Naive thymus-derived CD4-positive, alpha-beta T cell (primary cell): ENCODE measurements at regions of chr11 and their contacts with region 1.

Region 1: GRCh38 chr11:65615229-65615941 is at the start of gene PCNX3:
- DNase-seq: peak; percentile 95 to 100 (median 100)
- ATAC-seq: peak; percentile 92
- H3K4me3 ChIP-seq: peak within 1 kb of the TSS; percentile 89
- H3K4me3 Mint-ChIP-seq: peak within 1 kb of the TSS; percentile 94 to 99 (median 97)
- H3K27ac ChIP-seq: peak within 1 kb of the TSS; percentile 98
- H3K27ac Mint-ChIP-seq: peak within 1 kb of the TSS; percentile 90 to 99 (median 97)
- H3K4me1 ChIP-seq: peaks cover 42 to 45% of the 10 kb centered on the region in 2 donors
- H3K4me1 Mint-ChIP-seq: peaks cover 28 to 49% (median 39%) of the 10 kb centered on the region in 7 donors
- H3K27me3 ChIP-seq: no peaks in the 10 kb centered on the region
- H3K27me3 Mint-ChIP-seq: peaks cover 0 to 6% (median 0%) of the 10 kb centered on the region in 5 donors
- total RNA-seq, gene PCNX3: 50.4 to 64.9 (median 56.6) TPM

Region 2: GRCh38 chr11:64317957-64318693 is 1297.3 kb before region 1 on chr11 and contains the start of gene PRDX5:
- CTCF ChIA-PET with region 1: no interaction called
- POLR2A ChIA-PET with region 1: no interaction called
- intact Hi-C with region 1: loop called in 1 of 2 experiments (anchors 5 kb)
- DNase-seq: peak; percentile 93 to 97 (median 96)
- ATAC-seq: peak; percentile 87
- H3K4me3 ChIP-seq: peak within 1 kb of the TSS; percentile 60
- H3K4me3 Mint-ChIP-seq: peak within 1 kb of the TSS; percentile 85 to 99 (median 96)
- H3K27ac ChIP-seq: peak within 1 kb of the TSS; percentile 92
- H3K27ac Mint-ChIP-seq: peak within 1 kb of the TSS; percentile 97 to 100 (median 100)
- H3K4me1 ChIP-seq: peaks cover 7 to 10% of the 10 kb centered on the region in 2 donors
- H3K4me1 Mint-ChIP-seq: peaks cover 20 to 40% (median 28%) of the 10 kb centered on the region in 7 donors
- H3K27me3 ChIP-seq: no peaks in the 10 kb centered on the region
- H3K27me3 Mint-ChIP-seq: no peaks in the 10 kb centered on the region
- total RNA-seq, gene PRDX5: 41.4 to 99.2 (median 55.2) TPM

Region 3: GRCh38 chr11:65425105-65425970 is 190.0 kb before region 1 on chr11:
- CTCF ChIA-PET with region 1: no interaction called
- POLR2A ChIA-PET with region 1: interaction called, 13 read pairs
- intact Hi-C with region 1: no loop called
- DNase-seq: peak in 8 of 9 donors; percentile 75 to 98 (median 94)
- ATAC-seq: peak; percentile 56
- H3K4me3 ChIP-seq: peak overlapping the region; percentile 74
- H3K4me3 Mint-ChIP-seq: peak overlapping the region; percentile 92 to 100 (median 97)
- H3K27ac ChIP-seq: peak overlapping the region; percentile 98
- H3K27ac Mint-ChIP-seq: peak overlapping the region; percentile 97 to 100 (median 99)
- H3K4me1 ChIP-seq: peaks cover 45 to 46% of the 10 kb centered on the region in 2 donors
- H3K4me1 Mint-ChIP-seq: peaks cover 42 to 79% (median 50%) of the 10 kb centered on the region in 7 donors
- H3K27me3 ChIP-seq: no peaks in the 10 kb centered on the region
- H3K27me3 Mint-ChIP-seq: peaks cover 0 to 32% (median 0%) of the 10 kb centered on the region in 5 donors

Region 4: GRCh38 chr11:65569973-65570918 is 45.1 kb before region 1 on chr11 and contains the start of gene ZNRD2:
- CTCF ChIA-PET with region 1: interaction called, 5 read pairs
- POLR2A ChIA-PET with region 1: interaction called, 40 read pairs
- intact Hi-C with region 1: loop called (anchors 1 kb)
- DNase-seq: peak; percentile 94 to 99 (median 98)
- ATAC-seq: peak; percentile 82
- H3K4me3 ChIP-seq: peak within 1 kb of the TSS; percentile 96
- H3K4me3 Mint-ChIP-seq: peak within 1 kb of the TSS; percentile 91 to 100 (median 97)
- H3K27ac ChIP-seq: peak within 1 kb of the TSS; percentile 96
- H3K27ac Mint-ChIP-seq: peak within 1 kb of the TSS; percentile 89 to 100 (median 99)
- H3K4me1 ChIP-seq: peaks cover 63 to 64% of the 10 kb centered on the region in 2 donors
- H3K4me1 Mint-ChIP-seq: peaks cover 49 to 77% (median 69%) of the 10 kb centered on the region in 7 donors
- H3K27me3 ChIP-seq: no peaks in the 10 kb centered on the region
- H3K27me3 Mint-ChIP-seq: no peaks in the 10 kb centered on the region
- total RNA-seq, gene ZNRD2: 29.1 to 40.9 (median 32.9) TPM

Region 5: DNA sequence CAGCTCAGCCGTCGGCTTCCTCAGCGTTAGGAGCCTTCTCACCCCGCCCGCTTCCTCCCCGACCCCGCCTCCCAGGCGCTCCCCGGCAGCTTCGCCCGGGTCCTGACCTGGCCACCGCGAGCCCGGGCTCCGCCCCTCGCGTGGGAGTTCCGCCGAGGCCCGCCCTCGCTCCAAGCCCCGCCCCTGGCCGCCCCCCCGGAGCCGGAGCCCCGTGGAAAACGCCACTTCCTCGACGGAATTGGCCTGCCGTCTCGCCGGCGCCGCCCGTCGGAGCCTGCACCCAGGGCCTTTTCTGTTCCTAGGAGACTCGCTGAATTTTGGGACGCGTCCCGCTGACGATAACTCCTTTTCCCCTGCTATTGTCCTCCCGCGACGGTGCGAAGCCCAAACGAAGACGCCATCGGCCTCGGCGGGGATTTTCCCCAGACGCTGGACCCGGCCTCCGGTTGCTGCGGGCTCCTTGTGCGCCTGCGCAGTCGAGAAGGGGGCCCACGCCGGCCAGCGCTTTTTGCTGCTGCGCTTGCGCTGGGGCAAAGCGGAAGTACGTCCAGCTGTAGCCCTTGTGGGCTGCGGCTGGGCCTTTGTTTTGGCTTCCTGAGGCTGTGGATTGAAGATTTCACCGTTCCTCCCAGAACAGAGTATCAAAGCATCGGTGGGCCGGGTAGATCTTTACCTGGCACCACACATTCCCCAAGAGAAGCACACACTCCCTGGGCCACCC is 37.3 kb after region 1 on chr11:
- CTCF ChIA-PET with region 1: no interaction called
- POLR2A ChIA-PET with region 1: interaction called, 52 read pairs
- intact Hi-C with region 1: loop called (anchors 1 kb)
- DNase-seq: peak; percentile 91 to 99 (median 95)
- ATAC-seq: peak; percentile 92
- H3K4me3 ChIP-seq: peak overlapping the region; percentile 58
- H3K4me3 Mint-ChIP-seq: peak overlapping the region; percentile 70 to 95 (median 90)
- H3K27ac ChIP-seq: peak overlapping the region; percentile 98
- H3K27ac Mint-ChIP-seq: peak overlapping the region; percentile 90 to 99 (median 98)
- H3K4me1 ChIP-seq: peaks cover 25% of the 10 kb centered on the region in 2 donors
- H3K4me1 Mint-ChIP-seq: peaks cover 36 to 59% (median 51%) of the 10 kb centered on the region in 7 donors
- H3K27me3 ChIP-seq: no peaks in the 10 kb centered on the region
- H3K27me3 Mint-ChIP-seq: no peaks in the 10 kb centered on the region

Region 6: DNA sequence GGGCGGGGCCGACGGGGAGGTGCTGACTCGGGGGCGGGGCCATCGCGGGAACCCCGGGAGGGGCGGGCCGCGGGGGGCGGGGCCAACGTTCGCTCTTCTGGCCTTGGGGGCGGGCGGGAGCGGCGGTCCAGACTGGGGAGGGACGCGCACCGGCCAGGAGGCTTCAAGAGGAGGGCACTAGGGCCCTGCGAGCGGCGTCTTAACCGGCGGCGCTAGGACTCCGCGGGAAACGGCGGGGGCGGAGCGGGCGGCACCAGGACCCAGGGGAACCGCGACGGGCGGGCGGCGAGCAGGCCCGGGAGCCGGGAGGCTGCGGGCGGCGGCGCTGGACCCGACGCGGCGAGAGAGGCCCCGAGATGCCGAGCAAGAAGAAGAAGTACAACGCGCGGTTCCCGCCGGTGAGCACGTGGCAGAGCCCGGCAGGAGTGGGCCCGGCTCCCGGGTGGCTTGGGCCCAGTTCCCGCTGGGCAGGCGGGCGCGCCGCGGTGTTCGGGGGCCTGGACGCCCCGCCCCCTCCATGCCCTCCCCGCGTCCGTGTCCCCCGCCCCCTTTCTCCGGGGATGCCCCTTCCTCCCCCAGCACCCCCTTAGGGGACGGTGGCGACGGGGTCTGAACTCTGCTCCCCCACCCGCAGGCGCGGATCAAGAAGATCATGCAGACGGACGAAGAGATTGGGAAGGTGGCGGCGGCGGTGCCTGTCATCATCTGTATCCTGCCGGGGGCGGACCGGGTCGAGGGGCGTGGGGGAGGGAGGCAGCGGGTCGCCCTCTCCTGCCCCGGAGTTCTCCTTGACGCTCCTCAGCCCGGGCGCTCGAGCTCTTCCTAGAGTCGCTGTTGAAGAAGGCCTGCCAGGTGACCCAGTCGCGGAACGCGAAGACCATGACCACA is 304.0 kb after region 1 on chr11 and contains the start of gene DRAP1:
- CTCF ChIA-PET with region 1: no interaction called
- POLR2A ChIA-PET with region 1: no interaction called
- intact Hi-C with region 1: loop called (anchors 1 kb)
- DNase-seq: peak; percentile 95 to 98 (median 97)
- ATAC-seq: peak; percentile 93
- H3K4me3 ChIP-seq: peak within 1 kb of the TSS; percentile 83
- H3K4me3 Mint-ChIP-seq: peak within 1 kb of the TSS; percentile 86 to 96 (median 93)
- H3K27ac ChIP-seq: peak within 1 kb of the TSS; percentile 95
- H3K27ac Mint-ChIP-seq: peak within 1 kb of the TSS; percentile 79 to 96 (median 90)
- H3K4me1 ChIP-seq: peaks cover 26 to 28% of the 10 kb centered on the region in 2 donors
- H3K4me1 Mint-ChIP-seq: peaks cover 32 to 61% (median 36%) of the 10 kb centered on the region in 7 donors
- H3K27me3 ChIP-seq: no peaks in the 10 kb centered on the region
- H3K27me3 Mint-ChIP-seq: no peaks in the 10 kb centered on the region
- total RNA-seq, gene DRAP1: 72.6 to 166 (median 81.9) TPM

Region 7: DNA sequence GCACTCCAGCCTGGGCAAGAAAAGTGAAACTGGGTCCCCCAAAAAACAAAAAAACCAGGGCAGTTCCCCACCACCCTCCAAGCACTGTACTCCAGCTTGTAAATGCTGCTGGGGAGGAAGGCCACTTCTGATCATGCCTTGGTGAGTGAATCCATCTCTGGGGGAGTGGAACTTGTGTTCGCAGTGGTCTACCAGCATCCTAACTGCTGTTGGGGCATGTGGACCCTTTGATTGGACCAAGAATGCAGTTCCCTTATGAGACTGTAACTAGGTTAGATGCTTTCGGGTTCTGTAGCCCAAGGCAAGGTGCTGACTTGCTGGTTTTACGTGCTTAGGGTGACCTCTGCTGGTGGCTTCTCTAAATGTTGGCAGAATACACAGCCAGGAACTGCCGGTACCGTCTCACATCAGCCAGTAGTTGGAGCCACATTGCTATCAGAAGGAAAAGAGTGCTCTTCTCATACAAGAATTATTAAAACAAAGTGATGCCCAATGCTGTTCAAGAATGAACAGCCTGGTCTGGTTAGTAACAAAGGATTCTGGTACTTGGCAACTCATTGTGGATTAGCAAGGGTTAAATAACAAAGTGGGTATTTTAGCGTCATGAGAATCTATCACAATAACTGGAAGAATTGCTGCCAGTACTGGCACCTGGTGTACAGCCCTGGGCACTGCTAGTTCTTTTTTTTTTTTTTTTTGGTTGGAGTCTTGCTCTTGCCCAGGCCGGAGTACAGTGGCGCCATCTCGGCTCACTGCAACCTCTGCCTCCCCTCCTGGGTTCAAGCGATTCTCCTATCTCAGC is 373.6 kb after region 1 on chr11:
- CTCF ChIA-PET with region 1: no interaction called
- POLR2A ChIA-PET with region 1: no interaction called
- intact Hi-C with region 1: no loop called
- DNase-seq: peak; percentile 66 to 95 (median 91)
- ATAC-seq: peak; percentile 100
- H3K4me3 ChIP-seq: no peak overlapping the region
- H3K4me3 Mint-ChIP-seq: no peak overlapping the region
- H3K27ac ChIP-seq: no peak overlapping the region
- H3K27ac Mint-ChIP-seq: peak overlapping the region; percentile 0 to 90 (median 74)
- H3K4me1 ChIP-seq: no peaks in the 10 kb centered on the region
- H3K4me1 Mint-ChIP-seq: peaks cover 5 to 7% (median 6%) of the 10 kb centered on the region in 7 donors
- H3K27me3 ChIP-seq: no peaks in the 10 kb centered on the region
- H3K27me3 Mint-ChIP-seq: no peaks in the 10 kb centered on the region

Region 8: DNA sequence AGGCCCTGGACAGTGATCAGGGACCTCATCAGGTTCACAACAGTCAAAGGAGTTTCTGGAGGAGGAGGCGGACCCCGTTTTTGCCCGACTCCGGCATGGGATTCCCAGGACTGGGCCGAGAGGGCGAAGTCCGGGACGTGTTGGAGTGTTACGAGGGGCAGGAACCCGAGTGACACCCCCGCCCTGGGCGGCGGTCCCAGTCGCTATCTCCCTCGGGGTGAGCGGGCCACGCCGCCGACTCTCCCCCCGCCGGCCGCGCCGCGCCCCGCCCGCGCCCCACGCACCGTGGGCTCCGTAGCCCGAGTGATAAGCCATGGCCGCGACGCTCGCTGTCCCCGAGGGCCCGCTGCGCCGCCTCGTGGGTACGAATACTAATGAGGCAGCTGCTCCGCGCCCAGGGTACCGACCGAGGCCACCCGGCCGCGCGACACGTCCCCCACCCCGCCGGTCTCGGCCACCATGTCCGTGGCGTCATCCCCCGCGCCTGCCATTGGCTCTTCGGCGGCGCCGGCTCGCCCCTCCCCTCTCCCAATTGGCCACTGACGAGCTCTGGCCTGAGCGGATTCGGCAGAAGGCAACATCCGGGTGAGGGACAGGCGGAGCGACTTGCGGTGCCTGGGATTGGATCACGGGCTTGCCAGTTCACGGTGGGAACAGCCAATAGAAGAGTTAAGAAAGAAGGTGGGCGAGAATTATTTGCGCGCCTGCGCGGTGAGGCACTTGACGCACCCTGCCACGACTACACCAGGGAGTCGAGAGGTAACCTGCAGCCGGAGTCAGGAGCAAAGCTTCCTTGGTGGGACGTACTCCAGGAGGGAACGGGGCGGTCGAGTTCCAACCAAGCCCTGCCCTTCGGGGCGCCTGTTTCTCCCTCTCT is 673.5 kb after region 1 on chr11 and contains the start of gene YIF1A:
- CTCF ChIA-PET with region 1: interaction called, 3 read pairs
- POLR2A ChIA-PET with region 1: no interaction called
- intact Hi-C with region 1: loop called in 1 of 2 experiments (anchors 1 kb)
- DNase-seq: peak; percentile 92 to 99 (median 99)
- ATAC-seq: peak; percentile 96
- H3K4me3 ChIP-seq: peak within 1 kb of the TSS; percentile 99
- H3K4me3 Mint-ChIP-seq: peak within 1 kb of the TSS; percentile 86 to 96 (median 90)
- H3K27ac ChIP-seq: peak within 1 kb of the TSS; percentile 76
- H3K27ac Mint-ChIP-seq: peak within 1 kb of the TSS; percentile 74 to 97 (median 92)
- H3K4me1 ChIP-seq: peaks cover 18 to 19% of the 10 kb centered on the region in 2 donors
- H3K4me1 Mint-ChIP-seq: peaks cover 17 to 46% (median 37%) of the 10 kb centered on the region in 7 donors
- H3K27me3 ChIP-seq: peaks cover 0 to 7% of the 10 kb centered on the region in 2 donors
- H3K27me3 Mint-ChIP-seq: peaks cover 13 to 35% (median 13%) of the 10 kb centered on the region in 5 donors
- total RNA-seq, gene YIF1A: 25.0 to 66.2 (median 33.3) TPM